ENCODE measurements at regions of chr2 and their contacts with region 1.

Region 1: GRCh38 chr2:63856303-63856603 is 14.6 kb downstream of the UGP2 start:
- DNase-seq: peak in 1 of 2 donors; percentile 87
- ATAC-seq: peak; percentile 86 to 92 (median 87)
- H3K4me3 ChIP-seq: no peak overlapping the region
- H3K4me3 Mint-ChIP-seq: peak overlapping the region; percentile 78
- H3K27ac ChIP-seq: peak overlapping the region; percentile 72
- H3K27ac Mint-ChIP-seq: peak overlapping the region; percentile 91 to 92
- H3K4me1 ChIP-seq: peaks cover 15% of the 10 kb centered on the region
- H3K4me1 Mint-ChIP-seq: peaks cover 53 to 59% of the 10 kb centered on the region in 2 donors
- H3K27me3 ChIP-seq: no peaks in the 10 kb centered on the region
- H3K27me3 Mint-ChIP-seq: no peaks in the 10 kb centered on the region
- CTCF ChIP-seq: no peak

Region 2: DNA sequence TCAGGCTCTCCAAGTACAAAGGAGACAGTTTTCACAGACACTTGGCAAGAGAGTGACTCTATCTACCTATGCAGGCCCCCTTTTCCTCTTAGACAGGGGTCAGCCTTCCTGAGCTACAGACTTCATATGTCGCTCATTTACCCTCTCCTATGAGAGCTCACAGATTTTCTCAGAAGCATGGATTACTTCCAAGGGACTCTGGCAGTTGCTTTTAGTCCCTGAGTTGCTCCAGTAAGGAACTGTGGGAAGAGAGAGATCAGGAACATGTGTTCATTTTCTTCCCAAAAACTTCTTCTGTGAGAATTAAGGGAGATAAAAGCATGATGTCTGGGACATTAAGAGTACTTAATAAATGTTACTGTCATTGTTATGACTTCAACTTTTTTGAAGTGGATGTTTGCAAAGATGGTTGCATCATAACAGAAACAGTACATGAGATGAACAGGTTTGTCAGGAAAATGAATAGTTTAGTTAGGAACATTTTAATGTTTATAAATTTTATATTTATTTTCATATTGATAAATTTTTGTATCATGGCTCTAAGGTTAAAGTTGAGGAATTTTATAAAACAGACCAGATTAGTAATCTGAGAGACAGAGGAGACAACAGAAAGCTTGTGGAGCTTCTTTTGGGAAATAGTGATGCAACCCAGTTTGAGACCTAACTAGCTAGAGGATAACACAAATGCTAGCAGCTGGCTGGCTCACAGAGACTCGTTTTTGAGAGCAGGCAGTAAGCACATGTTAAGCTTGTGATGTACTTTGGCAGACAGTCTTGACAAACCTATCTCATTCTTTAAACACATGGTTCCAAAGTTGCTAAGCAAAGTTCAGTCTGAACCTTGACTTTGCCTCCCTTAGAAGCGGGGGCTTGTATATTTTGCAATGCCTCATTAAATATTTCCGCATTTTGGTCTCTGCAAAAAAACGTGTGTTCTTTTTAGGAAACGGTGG is 36.2 kb before region 1 on chr2:
- intact Hi-C with region 1: no loop called
- DNase-seq: no peak
- ATAC-seq: no peak
- H3K4me3 ChIP-seq: no peak overlapping the region
- H3K4me3 Mint-ChIP-seq: no peak overlapping the region
- H3K27ac ChIP-seq: no peak overlapping the region
- H3K27ac Mint-ChIP-seq: no peak overlapping the region
- H3K4me1 ChIP-seq: no peaks in the 10 kb centered on the region
- H3K4me1 Mint-ChIP-seq: no peaks in the 10 kb centered on the region
- H3K27me3 ChIP-seq: no peaks in the 10 kb centered on the region
- H3K27me3 Mint-ChIP-seq: no peaks in the 10 kb centered on the region
- CTCF ChIP-seq: no peak

Region 3: DNA sequence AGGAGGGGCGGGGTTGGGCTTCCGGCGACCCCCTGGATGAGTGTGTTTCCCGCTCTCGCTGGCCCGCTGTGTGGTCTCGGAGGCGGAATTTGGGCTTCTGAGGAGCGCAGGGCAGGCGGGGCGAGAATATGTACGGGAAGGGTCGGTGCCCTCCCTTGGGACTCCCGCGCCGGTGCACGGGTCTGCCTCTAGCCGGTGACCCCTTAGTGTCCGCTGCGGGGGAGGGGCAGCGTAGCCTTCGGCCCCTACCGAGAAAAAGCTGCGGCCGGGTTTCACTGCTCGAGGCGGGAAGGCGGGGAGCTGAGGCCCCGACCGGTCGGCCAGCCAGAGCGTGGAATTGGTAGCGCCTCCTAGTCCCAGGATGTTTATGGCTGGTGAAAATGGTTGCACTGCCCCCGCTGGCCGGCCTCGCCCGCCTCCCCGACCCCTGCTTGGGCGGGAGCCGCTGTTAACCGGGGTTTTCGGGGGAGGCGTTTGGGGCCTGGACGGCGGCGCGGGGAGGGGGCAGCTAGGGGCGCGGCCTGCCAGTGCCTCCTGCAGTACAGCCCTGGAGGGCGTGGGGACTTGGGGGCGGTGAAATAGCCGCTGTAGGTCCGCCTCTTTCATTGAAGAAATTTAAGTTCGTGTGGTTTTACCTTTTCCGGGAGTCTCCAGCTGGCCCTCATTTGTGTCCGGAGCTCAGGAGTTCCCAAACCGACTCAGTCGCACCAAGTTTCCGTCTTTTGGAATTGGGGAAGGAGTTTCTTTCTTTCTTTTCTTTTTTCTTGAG is 14.8 kb before region 1 on chr2 and contains the start of gene UGP2:
- intact Hi-C with region 1: loop called (anchors 1 kb)
- DNase-seq: peak; percentile 85 to 89
- ATAC-seq: peak; percentile 74 to 85 (median 74)
- H3K4me3 ChIP-seq: peak within 1 kb of the TSS; percentile 77
- H3K4me3 Mint-ChIP-seq: peak within 1 kb of the TSS; percentile 97
- H3K27ac ChIP-seq: peak within 1 kb of the TSS; percentile 89
- H3K27ac Mint-ChIP-seq: peak within 1 kb of the TSS; percentile 90 to 97
- H3K4me1 ChIP-seq: peaks cover 12% of the 10 kb centered on the region
- H3K4me1 Mint-ChIP-seq: peaks cover 45 to 59% of the 10 kb centered on the region in 2 donors
- H3K27me3 ChIP-seq: no peaks in the 10 kb centered on the region
- H3K27me3 Mint-ChIP-seq: no peaks in the 10 kb centered on the region
- CTCF ChIP-seq: no peak
- total RNA-seq, gene UGP2: 100 to 117 (median 101) TPM